ENCODE measurements at regions of chr19 and their contacts with region 1.

Region 1: DNA sequence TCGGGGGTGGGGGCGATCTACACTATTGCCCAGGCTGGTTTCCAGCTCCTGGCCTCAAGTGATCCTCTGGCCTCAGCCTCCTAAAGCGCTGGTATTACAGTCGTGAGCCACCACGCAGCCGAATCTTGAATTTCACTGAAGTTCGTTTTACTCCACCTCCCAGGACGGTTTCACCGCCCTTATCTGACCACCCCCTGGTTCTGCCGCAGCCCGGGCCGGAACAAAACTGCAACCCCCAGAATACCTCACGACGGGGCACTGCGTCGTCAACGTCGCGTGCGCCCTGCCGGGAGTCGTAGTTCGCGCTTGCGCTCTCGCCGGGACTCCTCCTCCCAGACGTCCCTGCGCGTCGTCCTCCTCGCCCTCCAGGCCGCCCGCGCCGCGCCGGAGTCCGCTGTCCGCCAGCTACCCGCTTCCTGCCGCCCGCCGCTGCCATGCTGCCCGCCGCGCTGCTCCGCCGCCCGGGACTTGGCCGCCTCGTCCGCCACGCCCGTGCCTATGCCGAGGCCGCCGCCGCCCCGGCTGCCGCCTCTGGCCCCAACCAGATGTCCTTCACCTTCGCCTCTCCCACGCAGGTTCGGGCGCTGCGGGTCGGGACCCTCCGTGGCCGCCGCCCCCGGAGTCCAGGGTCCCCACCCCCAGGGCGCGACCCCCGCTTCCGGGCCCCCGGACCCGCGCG is at the start of gene ATP5F1D:
- DNase-seq: peak; percentile 96
- H3K4me3 Mint-ChIP-seq: peak within 1 kb of the TSS; percentile 91
- H3K27ac Mint-ChIP-seq: peak within 1 kb of the TSS; percentile 80
- H3K4me1 Mint-ChIP-seq: peaks cover 37% of the 10 kb centered on the region
- H3K27me3 Mint-ChIP-seq: peaks cover 9% of the 10 kb centered on the region
- total RNA-seq, gene ATP5F1D: 178 to 192 TPM

Region 2: GRCh38 chr19:920051-920864 is 321.3 kb before region 1 on chr19:
- CTCF ChIA-PET with region 1: no interaction called
- POLR2A ChIA-PET with region 1: no interaction called
- intact Hi-C with region 1: loop called (anchors 2 kb)
- DNase-seq: peak; percentile 78
- H3K4me3 Mint-ChIP-seq: peak overlapping the region; percentile 75
- H3K27ac Mint-ChIP-seq: peak overlapping the region; percentile 85
- H3K4me1 Mint-ChIP-seq: peaks cover 19% of the 10 kb centered on the region
- H3K27me3 Mint-ChIP-seq: no peaks in the 10 kb centered on the region

Region 3: DNA sequence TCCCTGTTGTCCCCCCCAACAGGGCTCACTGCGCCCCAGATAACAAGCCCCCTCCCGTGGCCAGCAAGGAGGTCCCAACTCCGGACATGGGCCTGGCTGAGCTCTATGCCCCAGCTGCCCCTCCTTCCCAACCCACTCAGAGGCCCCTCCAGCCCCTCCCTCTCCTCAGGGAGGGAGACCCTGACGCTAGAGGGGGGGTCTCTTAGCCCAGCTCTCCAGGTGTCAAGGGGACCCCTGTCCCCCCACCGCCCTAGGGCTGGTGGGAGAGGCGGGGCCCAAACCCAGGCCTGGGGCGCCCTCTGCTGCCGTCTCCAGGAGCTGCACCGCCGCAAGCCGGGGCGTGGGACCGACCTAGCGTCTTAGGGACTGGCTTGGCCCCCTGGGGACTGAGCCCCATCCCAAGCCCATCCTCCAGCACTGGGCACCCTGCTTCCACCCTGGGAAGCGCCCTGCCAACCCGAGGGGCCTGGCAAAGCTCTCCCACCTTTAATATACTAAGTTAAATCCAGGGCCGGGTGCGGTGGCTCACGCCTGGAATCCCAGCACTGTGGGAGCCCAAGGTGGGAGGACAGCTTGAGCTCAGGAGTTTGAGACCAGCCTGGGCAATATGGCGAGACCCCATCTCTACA is 239.9 kb before region 1 on chr19:
- CTCF ChIA-PET with region 1: interaction called, 6 read pairs
- POLR2A ChIA-PET with region 1: no interaction called
- intact Hi-C with region 1: loop called (anchors 2 kb)
- DNase-seq: peak; percentile 78
- H3K4me3 Mint-ChIP-seq: no peak overlapping the region
- H3K27ac Mint-ChIP-seq: no peak overlapping the region
- H3K4me1 Mint-ChIP-seq: peaks cover 11% of the 10 kb centered on the region
- H3K27me3 Mint-ChIP-seq: peaks cover 29% of the 10 kb centered on the region

Region 4: GRCh38 chr19:1103708-1104310 is 137.7 kb before region 1 on chr19 and contains the start of gene GPX4:
- CTCF ChIA-PET with region 1: interaction called, 4 read pairs
- POLR2A ChIA-PET with region 1: no interaction called
- intact Hi-C with region 1: loop called (anchors 5 kb)
- DNase-seq: peak; percentile 99
- H3K4me3 Mint-ChIP-seq: peak within 1 kb of the TSS; percentile 75
- H3K27ac Mint-ChIP-seq: peak within 1 kb of the TSS; percentile 89
- H3K4me1 Mint-ChIP-seq: peaks cover 50% of the 10 kb centered on the region
- H3K27me3 Mint-ChIP-seq: no peaks in the 10 kb centered on the region
- total RNA-seq, gene GPX4: 274 to 275 TPM

Region 5: GRCh38 chr19:1173845-1174809 is 67.4 kb before region 1 on chr19 and contains the start of gene SBNO2:
- CTCF ChIA-PET with region 1: no interaction called
- POLR2A ChIA-PET with region 1: no interaction called
- intact Hi-C with region 1: no loop called
- DNase-seq: peak; percentile 96
- H3K4me3 Mint-ChIP-seq: peak within 1 kb of the TSS; percentile 89
- H3K27ac Mint-ChIP-seq: peak within 1 kb of the TSS; percentile 92
- H3K4me1 Mint-ChIP-seq: peaks cover 32% of the 10 kb centered on the region
- H3K27me3 Mint-ChIP-seq: no peaks in the 10 kb centered on the region
- total RNA-seq, gene SBNO2: 96.9 to 110 TPM

Region 6: GRCh38 chr19:1205114-1206062 is 36.2 kb before region 1 on chr19 and contains the start of gene STK11:
- CTCF ChIA-PET with region 1: interaction called, 12 read pairs
- POLR2A ChIA-PET with region 1: no interaction called
- intact Hi-C with region 1: no loop called
- DNase-seq: peak; percentile 100
- H3K4me3 Mint-ChIP-seq: peak within 1 kb of the TSS; percentile 91
- H3K27ac Mint-ChIP-seq: peak within 1 kb of the TSS; percentile 81
- H3K4me1 Mint-ChIP-seq: peaks cover 24% of the 10 kb centered on the region
- H3K27me3 Mint-ChIP-seq: no peaks in the 10 kb centered on the region
- total RNA-seq, gene STK11: 66.4 to 74.3 TPM

Region 7: DNA sequence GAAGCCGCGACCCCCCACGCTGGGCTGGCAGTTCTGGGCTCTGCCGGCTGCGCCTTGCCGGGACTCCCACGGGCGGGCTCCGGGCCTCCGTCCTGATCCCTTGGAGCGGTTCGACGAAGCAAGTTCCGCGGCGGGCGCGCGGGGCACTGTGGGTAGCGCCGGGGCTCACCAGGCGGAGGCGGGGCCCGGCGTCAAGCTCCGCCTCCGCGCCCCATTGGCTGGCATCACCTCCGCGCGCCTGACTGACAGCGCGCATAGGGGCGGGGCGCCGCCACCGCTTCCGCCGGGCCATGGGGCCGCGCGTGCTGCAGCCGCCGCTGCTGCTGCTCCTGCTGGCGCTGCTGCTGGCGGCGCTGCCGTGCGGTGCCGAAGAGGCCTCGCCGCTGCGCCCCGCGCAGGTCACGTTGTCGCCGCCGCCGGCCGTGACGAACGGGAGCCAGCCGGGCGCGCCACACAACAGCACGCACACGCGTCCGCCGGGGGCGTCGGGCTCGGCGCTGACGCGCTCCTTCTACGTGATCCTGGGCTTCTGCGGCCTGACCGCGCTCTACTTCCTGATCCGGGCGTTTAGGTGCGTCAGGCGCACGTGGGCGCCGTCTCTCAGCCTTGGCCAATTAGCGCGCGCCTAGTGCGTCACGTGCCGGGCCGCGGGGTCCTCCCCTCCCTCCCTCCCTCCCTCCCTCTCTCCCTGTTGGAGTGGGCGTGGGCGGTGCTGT is 33.9 kb after region 1 on chr19 and contains the start of gene FAM174C:
- CTCF ChIA-PET with region 1: interaction called, 38 read pairs
- POLR2A ChIA-PET with region 1: interaction called, 3 read pairs
- intact Hi-C with region 1: no loop called
- DNase-seq: peak; percentile 97
- H3K4me3 Mint-ChIP-seq: peak within 1 kb of the TSS; percentile 86
- H3K27ac Mint-ChIP-seq: peak within 1 kb of the TSS; percentile 95
- H3K4me1 Mint-ChIP-seq: peaks cover 56% of the 10 kb centered on the region
- H3K27me3 Mint-ChIP-seq: no peaks in the 10 kb centered on the region
- total RNA-seq, gene FAM174C: 74.8 to 76.1 TPM